ENCODE measurements at regions of chr6 and their contacts with region 1.

Region 1: GRCh38 chr6:147506704-147507114 is 1.8 kb upstream of the SAMD5 start:
- DNase-seq: peak; percentile 76
- H3K4me3 Mint-ChIP-seq: peak overlapping the region; percentile 86
- H3K27ac Mint-ChIP-seq: no peak overlapping the region
- H3K4me1 Mint-ChIP-seq: peaks cover 24% of the 10 kb centered on the region
- H3K27me3 Mint-ChIP-seq: no peaks in the 10 kb centered on the region
- CTCF ChIP-seq: peak; percentile 95

Region 2: GRCh38 chr6:146905181-146905704 is 601.5 kb before region 1 on chr6:
- CTCF ChIA-PET with region 1: interaction called, 5 read pairs
- POLR2A ChIA-PET with region 1: no interaction called
- intact Hi-C with region 1: loop called (anchors 5 kb)
- DNase-seq: peak; percentile 90
- H3K4me3 Mint-ChIP-seq: no peak overlapping the region
- H3K27ac Mint-ChIP-seq: no peak overlapping the region
- H3K4me1 Mint-ChIP-seq: peaks cover 14% of the 10 kb centered on the region
- H3K27me3 Mint-ChIP-seq: no peaks in the 10 kb centered on the region
- CTCF ChIP-seq: no peak

Region 3: DNA sequence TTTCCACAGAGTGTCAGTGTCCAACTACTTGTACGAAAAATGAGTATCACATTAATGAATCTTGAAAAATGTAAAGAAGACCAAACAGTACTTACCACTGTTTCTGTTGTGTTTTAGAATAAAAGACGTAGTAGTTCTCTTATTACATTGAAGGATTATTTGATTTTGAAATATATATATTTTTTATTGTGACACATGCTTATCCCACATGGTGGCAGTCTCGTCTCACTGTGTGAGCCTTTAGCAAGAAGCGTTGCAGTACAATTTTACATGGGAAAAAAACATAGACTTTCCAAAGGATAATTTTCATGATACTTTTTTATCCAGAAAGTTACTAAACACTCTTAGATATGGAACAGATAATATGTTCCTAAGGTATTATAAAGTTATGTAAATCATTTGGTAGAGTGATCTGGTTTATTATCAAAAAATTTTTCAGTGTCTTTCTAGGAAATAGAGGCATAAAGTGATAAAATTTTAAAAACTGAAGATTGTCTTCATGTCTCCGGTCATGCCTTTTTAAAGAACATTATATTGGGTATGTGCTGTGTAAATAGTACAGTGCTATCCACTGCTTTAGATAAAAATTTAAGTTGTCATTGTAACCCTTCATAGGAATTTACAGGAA is 115.7 kb before region 1 on chr6:
- CTCF ChIA-PET with region 1: interaction called, 5 read pairs
- POLR2A ChIA-PET with region 1: no interaction called
- intact Hi-C with region 1: loop called (anchors 10 kb)
- DNase-seq: peak; percentile 43
- H3K4me3 Mint-ChIP-seq: no peak overlapping the region
- H3K27ac Mint-ChIP-seq: no peak overlapping the region
- H3K4me1 Mint-ChIP-seq: no peaks in the 10 kb centered on the region
- H3K27me3 Mint-ChIP-seq: no peaks in the 10 kb centered on the region
- CTCF ChIP-seq: peak; percentile 30

Region 4: DNA sequence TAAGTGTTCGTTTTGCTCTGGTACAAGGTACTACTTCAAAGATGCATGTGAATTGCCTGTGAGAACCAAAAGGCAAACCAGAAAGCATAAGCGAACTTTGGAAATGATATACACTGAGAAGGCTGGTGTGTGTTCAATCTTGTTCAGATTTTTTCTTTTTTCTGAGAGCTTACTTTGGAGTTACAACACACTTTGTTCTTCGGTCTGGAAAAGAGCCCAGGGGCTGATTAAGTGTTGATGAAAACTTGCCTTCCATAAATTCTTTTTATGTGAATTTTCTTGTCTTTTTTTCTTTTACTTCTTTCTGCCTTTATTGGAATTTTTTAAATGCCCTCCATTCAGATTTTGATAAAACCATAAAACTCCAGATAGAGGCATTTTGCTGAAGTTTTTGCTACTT is 440.8 kb after region 1 on chr6:
- CTCF ChIA-PET with region 1: interaction called, 10 read pairs
- POLR2A ChIA-PET with region 1: no interaction called
- intact Hi-C with region 1: no loop called
- DNase-seq: peak; percentile 66
- H3K4me3 Mint-ChIP-seq: peak overlapping the region; percentile 31
- H3K27ac Mint-ChIP-seq: peak overlapping the region; percentile 94
- H3K4me1 Mint-ChIP-seq: peaks cover 45% of the 10 kb centered on the region
- H3K27me3 Mint-ChIP-seq: no peaks in the 10 kb centered on the region
- CTCF ChIP-seq: no peak

Region 5: DNA sequence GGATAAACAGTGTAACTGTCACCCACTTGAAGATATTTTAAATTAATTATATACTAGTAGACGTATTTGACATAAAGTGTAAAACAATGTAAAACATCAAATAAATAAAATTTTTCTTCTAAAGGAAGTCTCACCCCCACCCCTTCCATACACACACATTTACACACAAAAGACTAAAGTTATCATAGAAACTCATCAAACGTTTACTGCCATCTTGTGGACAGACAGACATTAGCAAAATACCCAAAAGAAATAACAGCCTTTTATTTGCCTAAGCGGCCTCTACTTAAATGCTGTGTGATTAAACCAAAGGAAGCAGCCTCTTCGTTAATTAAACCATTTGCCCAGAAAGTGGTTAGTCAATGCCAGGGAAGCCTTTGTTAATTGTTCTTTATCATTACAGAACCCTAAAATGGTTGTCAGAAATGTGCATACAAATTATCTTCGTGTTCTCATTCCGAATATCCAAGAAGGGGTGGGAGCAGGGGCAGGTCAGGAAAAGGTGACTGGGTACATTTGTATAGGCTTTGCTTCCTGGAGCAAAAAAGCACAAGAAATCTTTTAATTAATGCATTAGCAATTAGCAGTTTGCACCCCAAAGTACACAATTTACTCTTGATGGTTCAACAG is 659.7 kb after region 1 on chr6:
- CTCF ChIA-PET with region 1: interaction called, 121 read pairs
- POLR2A ChIA-PET with region 1: interaction called, 6 read pairs
- intact Hi-C with region 1: loop called (anchors 1 kb)
- DNase-seq: peak; percentile 71
- H3K4me3 Mint-ChIP-seq: no peak overlapping the region
- H3K27ac Mint-ChIP-seq: no peak overlapping the region
- H3K4me1 Mint-ChIP-seq: no peaks in the 10 kb centered on the region
- H3K27me3 Mint-ChIP-seq: no peaks in the 10 kb centered on the region
- CTCF ChIP-seq: peak; percentile 63

Region 6: DNA sequence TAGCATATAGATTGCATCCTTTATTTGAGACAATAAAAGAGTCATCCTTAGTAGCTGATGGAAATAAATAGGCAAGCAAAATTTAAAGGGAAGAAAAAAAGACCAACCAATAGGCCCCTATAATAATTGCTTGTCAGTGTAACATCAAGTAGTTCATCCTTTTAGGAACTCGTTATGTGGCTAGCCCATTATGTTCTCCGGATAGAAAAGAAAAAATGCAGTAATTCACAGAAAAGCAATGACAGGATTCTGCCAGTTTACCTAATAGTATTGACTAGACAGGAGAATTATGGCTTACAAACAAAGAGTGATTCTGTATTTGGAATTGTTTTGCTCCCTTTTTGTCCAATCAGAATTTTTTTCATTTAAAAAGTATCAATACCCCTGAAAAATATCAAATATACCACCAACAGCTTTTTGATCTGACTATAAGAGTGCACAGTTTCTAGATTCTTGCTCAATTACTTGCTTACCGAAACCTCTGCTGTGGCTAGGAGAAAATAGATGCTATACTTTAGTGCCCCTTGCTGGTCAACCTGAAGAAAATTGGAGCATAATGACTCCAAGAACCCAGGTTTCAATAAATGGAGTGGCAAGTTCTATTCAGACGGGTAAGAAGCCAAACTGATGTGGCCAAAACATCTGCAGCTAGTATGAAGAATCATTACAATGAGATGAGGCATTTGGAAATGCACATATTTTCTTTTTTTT is 744.4 kb after region 1 on chr6:
- CTCF ChIA-PET with region 1: interaction called, 25 read pairs
- POLR2A ChIA-PET with region 1: no interaction called
- intact Hi-C with region 1: loop called (anchors 1 kb)
- DNase-seq: peak; percentile 66
- H3K4me3 Mint-ChIP-seq: no peak overlapping the region
- H3K27ac Mint-ChIP-seq: no peak overlapping the region
- H3K4me1 Mint-ChIP-seq: peaks cover 6% of the 10 kb centered on the region
- H3K27me3 Mint-ChIP-seq: no peaks in the 10 kb centered on the region
- CTCF ChIP-seq: peak; percentile 63